GM23248 (cell line): ENCODE measurements at regions of chr5 and their contacts with region 1.

Region 1: DNA sequence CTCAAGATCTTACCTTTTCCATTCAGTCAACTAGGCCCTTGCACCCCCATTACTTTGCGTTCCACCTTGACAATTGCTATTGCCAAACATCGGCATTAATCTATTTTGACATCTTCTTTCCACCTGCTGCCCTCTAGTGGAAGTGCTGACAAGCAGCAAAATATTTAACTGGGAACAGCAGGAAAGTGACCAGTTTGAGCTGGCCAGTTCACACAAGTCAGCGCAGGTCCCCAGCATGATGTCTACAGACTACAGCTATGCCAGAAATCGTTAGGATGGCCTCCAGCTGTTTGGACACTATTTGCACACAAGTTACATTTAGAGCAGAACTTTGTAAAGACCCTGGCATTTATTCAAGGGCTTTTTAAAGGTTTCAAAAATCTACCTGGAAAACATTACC is 160.1 kb downstream of the GHR start:
- DNase-seq: peak; percentile 63
- H3K4me3 ChIP-seq: no peak overlapping the region
- H3K27ac ChIP-seq: no peak overlapping the region
- H3K4me1 ChIP-seq: no peaks in the 10 kb centered on the region
- H3K27me3 ChIP-seq: peaks cover 24% of the 10 kb centered on the region

Region 2: DNA sequence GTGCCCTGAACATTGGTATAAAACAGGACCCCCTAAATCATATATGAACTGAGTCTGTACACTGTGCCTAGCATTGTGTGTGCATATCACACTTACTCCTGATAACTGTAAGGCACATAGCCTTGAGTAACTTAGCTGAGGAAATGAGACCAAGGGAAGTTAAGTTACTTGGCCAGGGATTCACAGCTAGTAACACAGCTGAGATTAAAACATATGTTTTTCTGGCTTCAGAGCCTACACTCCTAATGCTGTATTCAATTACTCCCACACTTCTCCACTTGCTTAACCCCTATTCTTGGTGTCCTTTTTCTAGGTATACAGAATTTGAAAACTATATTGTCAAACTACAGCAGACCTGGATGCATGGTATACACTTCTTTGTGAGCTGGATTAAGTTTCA is 147.3 kb before region 1 on chr5:
- in situ Hi-C with region 1: no loop called
- DNase-seq: no peak
- H3K4me3 ChIP-seq: no peak overlapping the region
- H3K27ac ChIP-seq: no peak overlapping the region
- H3K4me1 ChIP-seq: no peaks in the 10 kb centered on the region
- H3K27me3 ChIP-seq: no peaks in the 10 kb centered on the region

Region 3: GRCh38 chr5:42784132-42784531 is 200.8 kb after region 1 on chr5:
- in situ Hi-C with region 1: no loop called
- DNase-seq: peak; percentile 9
- H3K4me3 ChIP-seq: no peak overlapping the region
- H3K27ac ChIP-seq: no peak overlapping the region
- H3K4me1 ChIP-seq: peaks cover 7% of the 10 kb centered on the region; the same call in 1 of the 2 replicates
- H3K27me3 ChIP-seq: no peaks in the 10 kb centered on the region

Region 4: DNA sequence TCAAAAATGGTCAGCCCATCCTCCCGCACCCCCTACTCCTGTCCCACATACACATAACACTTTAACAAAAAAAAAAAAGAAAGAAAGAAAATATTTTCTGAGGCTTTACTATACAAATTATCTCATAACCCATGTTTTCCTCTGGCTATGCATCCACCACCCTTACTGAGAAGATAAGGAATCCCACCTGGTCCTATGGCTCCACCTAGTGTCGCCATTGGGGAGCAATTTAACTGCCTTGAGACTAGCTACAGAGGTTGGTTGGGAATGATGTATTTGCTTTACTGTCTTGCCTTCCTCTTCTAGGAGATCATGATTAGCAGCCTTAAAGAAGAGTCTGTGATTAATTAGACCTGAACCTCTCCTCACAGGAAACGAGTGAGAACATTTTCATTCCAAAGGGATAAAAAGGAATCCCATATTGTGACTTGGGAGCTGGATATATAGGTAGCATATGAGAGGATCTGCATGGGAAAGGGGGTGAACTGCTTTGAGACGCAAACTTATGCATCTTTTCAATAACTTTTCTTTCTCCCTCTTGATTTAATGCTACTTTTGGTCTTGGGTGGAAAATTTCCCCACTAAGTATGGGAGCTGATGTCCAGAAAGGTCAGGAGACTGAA is 306.1 kb after region 1 on chr5:
- in situ Hi-C with region 1: loop called (anchors 25 kb)
- DNase-seq: peak; percentile 67
- H3K4me3 ChIP-seq: no peak overlapping the region
- H3K27ac ChIP-seq: no peak overlapping the region
- H3K4me1 ChIP-seq: no peaks in the 10 kb centered on the region
- H3K27me3 ChIP-seq: peaks cover 41% of the 10 kb centered on the region